Posterior vena cava (tissue), 2 donors: ENCODE measurements at regions of chr20 and their contacts with region 1.

Region 1: GRCh38 chr20:8853805-8854338 is 215.0 kb upstream of the PLCB4 start:
- DNase-seq: no peak

Region 2: DNA sequence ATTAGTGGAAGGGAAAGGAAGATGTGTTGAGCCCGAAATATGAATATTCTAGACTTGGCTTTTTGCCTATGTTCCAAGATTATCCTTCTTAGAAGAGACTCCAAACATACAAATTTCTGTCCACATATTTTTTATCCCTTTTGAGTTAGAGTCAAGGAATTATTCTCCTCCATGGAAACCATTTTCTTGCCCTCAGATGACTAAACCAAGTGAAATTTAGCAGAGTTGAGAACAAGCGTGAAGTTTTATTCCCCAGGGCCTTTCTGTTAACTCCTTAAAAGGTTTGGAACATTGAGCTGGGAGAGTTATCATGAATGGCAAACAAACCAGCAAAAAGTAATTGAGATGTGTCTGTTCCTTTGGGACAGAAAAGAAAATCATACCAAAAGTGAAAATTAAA is 71.1 kb before region 1 on chr20:
- intact Hi-C with region 1: loop called in 1 of 2 experiments (anchors 10 kb)
- DNase-seq: no peak

Region 3: DNA sequence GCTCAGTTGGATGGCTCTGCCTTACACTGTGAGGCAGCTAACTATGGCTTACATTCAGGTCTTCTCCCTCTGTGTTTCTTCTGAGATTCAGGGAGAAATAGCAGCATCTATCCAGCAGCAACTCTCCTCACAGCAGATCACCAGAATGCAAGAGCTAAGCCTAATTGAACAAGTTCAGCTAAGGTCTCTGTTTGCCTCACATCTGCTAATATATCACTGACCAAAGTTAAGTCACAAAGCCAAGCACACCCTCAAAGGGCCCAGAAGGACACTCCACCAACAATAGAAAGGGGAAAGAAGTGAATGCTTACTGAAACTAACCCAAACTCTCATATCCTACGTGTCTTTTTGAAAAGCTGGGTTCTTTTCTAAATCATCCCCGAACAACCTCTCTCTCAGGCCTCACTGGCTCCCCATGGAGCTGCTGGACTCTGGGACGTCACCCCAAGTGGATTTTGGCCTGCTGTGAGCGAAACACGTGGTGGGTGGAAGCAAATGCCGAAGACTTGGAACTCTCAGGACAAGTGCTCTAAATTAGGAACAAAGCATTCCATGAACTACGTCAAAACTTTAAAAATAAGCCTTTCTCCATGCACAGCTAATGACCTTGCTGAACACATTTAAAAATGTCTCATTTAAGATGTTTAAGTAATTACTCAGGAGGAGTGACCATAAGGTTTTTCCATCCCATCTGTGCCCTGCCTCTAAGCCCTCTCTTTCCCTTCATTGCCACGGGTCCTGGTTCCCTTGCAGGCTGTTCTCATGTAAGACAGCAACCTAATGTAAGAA is 47.6 kb after region 1 on chr20:
- intact Hi-C with region 1: loop called in 1 of 2 experiments (anchors 5 kb)
- DNase-seq: peak; percentile 88

Region 4: GRCh38 chr20:9068851-9069663 is 215.2 kb after region 1 on chr20 and contains the start of gene PLCB4:
- intact Hi-C with region 1: loop called (anchors 10 kb)
- DNase-seq: peak; percentile 81
- total RNA-seq, gene PLCB4: 40.4 to 53.3 TPM